H1 (cell line): ENCODE measurements at regions of chr15 and their contacts with region 1.

Region 1: DNA sequence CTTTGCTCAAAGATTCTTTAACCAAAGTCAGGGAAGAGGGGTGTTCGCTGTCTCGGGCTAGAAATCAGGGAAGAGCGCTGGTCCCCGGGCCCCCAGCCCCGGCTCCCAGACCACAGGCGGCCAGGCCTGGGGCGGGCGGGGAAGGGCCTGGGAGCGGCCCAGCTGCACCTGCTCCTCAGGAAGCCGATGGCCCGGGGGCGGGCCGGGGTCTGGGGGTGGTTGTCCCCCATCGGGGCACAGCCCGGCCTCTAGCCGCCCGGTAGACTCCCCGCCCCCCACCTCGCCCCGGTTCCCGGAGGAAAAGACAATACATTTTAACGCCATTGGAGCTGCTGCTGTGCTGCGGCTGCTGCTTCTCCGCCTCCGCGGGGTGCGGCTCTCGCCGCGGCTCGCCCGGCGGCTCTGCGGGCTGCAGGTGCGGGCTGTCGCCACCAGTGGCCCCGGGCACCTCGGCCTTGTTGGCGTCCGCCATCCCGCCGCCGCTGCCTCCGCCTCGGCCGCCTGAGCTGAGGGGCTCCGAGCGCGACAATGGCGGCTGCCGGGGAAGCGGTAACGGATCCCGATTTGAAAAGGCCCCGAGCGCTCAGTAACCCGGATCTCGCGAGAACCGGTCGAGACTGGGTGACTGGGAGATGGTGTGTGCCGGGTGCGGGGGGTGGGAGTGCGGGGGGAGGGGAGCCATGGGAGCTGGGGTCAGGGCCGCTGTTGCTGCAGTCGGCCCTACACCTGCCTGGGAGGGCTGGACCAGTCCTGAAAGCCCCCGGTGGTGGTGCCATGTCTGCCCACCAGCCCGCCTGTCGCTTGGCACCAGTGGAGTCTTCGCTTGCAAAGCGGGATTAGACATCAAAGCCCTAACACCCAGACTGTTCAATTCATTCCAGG is at the start of gene MYEF2:
- DNase-seq: peak; percentile 68 to 93
- H3K4me3 ChIP-seq: peak within 1 kb of the TSS; percentile 76 to 99 (median 86)
- H3K27ac ChIP-seq: peak within 1 kb of the TSS; percentile 86
- H3K4me1 ChIP-seq: peaks cover 0 to 9% (median 1%) of the 10 kb centered on the region in 4 experiments; a peak in 2 of 7 replicates
- H3K27me3 ChIP-seq: no peaks in the 10 kb centered on the region
- CTCF ChIP-seq: no peak
- EP300 ChIP-seq: peak in 1 of 2 experiments; percentile 8; a peak in 1 of 3 replicates
- POLR2A ChIP-seq: peak; percentile 90 to 91
- RAD21 ChIP-seq: no peak
- total RNA-seq, gene MYEF2: 78.2 and 79.2 TPM in 2 replicates

Region 2: GRCh38 chr15:48202068-48202467 is 24.1 kb after region 1 on chr15:
- CTCF ChIA-PET with region 1: no interaction called
- POLR2A ChIA-PET with region 1: interaction called, 13 read pairs
- DNase-seq: no peak
- H3K4me3 ChIP-seq: no peak overlapping the region
- H3K27ac ChIP-seq: no peak overlapping the region
- H3K4me1 ChIP-seq: no peaks in the 10 kb centered on the region; a peak in 1 of 7 replicates
- H3K27me3 ChIP-seq: peaks cover 0 to 1% (median 0%) of the 10 kb centered on the region in 4 experiments; a peak in 1 of 7 replicates
- CTCF ChIP-seq: no peak
- EP300 ChIP-seq: peak in 1 of 2 experiments; percentile 32; a peak in 1 of 3 replicates
- POLR2A ChIP-seq: no peak
- RAD21 ChIP-seq: no peak